CD4-positive, alpha-beta memory T cell (primary cell): ENCODE measurements at regions of chr12 and their contacts with region 1.

Region 1: GRCh38 chr12:50222275-50222795 is 55.2 kb upstream of the CERS5 start:
- DNase-seq: peak; percentile 30 to 43 (median 32)
- H3K4me3 ChIP-seq: peak overlapping the region; percentile 68 to 81
- H3K4me3 Mint-ChIP-seq: no peak overlapping the region
- H3K27ac ChIP-seq: peak overlapping the region; percentile 75
- H3K27ac Mint-ChIP-seq: no peak overlapping the region
- H3K4me1 ChIP-seq: peaks cover 41% of the 10 kb centered on the region
- H3K4me1 Mint-ChIP-seq: peaks cover 24 to 29% (median 27%) of the 10 kb centered on the region in 4 donors
- H3K27me3 ChIP-seq: no peaks in the 10 kb centered on the region
- H3K27me3 Mint-ChIP-seq: no peaks in the 10 kb centered on the region

Region 2: GRCh38 chr12:49698619-49699545 is 523.5 kb before region 1 on chr12:
- CTCF ChIA-PET with region 1: no interaction called
- POLR2A ChIA-PET with region 1: no interaction called
- intact Hi-C with region 1: no loop called
- DNase-seq: peak; percentile 11 to 55 (median 28)
- H3K4me3 ChIP-seq: peak overlapping the region in 1 of 2 donors; percentile 23
- H3K4me3 Mint-ChIP-seq: peak overlapping the region; percentile 82 to 91 (median 88)
- H3K27ac ChIP-seq: peak overlapping the region; percentile 42
- H3K27ac Mint-ChIP-seq: peak overlapping the region; percentile 75 to 93 (median 87)
- H3K4me1 ChIP-seq: peaks cover 32% of the 10 kb centered on the region
- H3K4me1 Mint-ChIP-seq: peaks cover 26 to 64% (median 43%) of the 10 kb centered on the region in 4 donors
- H3K27me3 ChIP-seq: no peaks in the 10 kb centered on the region
- H3K27me3 Mint-ChIP-seq: no peaks in the 10 kb centered on the region

Region 3: GRCh38 chr12:50032639-50033581 is 189.4 kb before region 1 on chr12:
- CTCF ChIA-PET with region 1: no interaction called
- POLR2A ChIA-PET with region 1: no interaction called
- intact Hi-C with region 1: no loop called
- DNase-seq: no peak
- H3K4me3 ChIP-seq: no peak overlapping the region
- H3K4me3 Mint-ChIP-seq: no peak overlapping the region
- H3K27ac ChIP-seq: no peak overlapping the region
- H3K27ac Mint-ChIP-seq: no peak overlapping the region
- H3K4me1 ChIP-seq: no peaks in the 10 kb centered on the region
- H3K4me1 Mint-ChIP-seq: no peaks in the 10 kb centered on the region
- H3K27me3 ChIP-seq: no peaks in the 10 kb centered on the region
- H3K27me3 Mint-ChIP-seq: peaks cover 9 to 13% of the 10 kb centered on the region in 2 donors

Region 4: GRCh38 chr12:50187084-50187900 is 35.0 kb before region 1 on chr12:
- CTCF ChIA-PET with region 1: interaction called, 3 read pairs
- POLR2A ChIA-PET with region 1: interaction called, 4 read pairs
- intact Hi-C with region 1: loop called (anchors 1 kb)
- DNase-seq: no peak
- H3K4me3 ChIP-seq: no peak overlapping the region
- H3K4me3 Mint-ChIP-seq: no peak overlapping the region
- H3K27ac ChIP-seq: no peak overlapping the region
- H3K27ac Mint-ChIP-seq: peak overlapping the region in 6 of 7 donors; percentile 14 to 80 (median 54)
- H3K4me1 ChIP-seq: peaks cover 38% of the 10 kb centered on the region
- H3K4me1 Mint-ChIP-seq: peaks cover 14 to 41% (median 23%) of the 10 kb centered on the region in 4 donors
- H3K27me3 ChIP-seq: no peaks in the 10 kb centered on the region
- H3K27me3 Mint-ChIP-seq: no peaks in the 10 kb centered on the region

Region 5: DNA sequence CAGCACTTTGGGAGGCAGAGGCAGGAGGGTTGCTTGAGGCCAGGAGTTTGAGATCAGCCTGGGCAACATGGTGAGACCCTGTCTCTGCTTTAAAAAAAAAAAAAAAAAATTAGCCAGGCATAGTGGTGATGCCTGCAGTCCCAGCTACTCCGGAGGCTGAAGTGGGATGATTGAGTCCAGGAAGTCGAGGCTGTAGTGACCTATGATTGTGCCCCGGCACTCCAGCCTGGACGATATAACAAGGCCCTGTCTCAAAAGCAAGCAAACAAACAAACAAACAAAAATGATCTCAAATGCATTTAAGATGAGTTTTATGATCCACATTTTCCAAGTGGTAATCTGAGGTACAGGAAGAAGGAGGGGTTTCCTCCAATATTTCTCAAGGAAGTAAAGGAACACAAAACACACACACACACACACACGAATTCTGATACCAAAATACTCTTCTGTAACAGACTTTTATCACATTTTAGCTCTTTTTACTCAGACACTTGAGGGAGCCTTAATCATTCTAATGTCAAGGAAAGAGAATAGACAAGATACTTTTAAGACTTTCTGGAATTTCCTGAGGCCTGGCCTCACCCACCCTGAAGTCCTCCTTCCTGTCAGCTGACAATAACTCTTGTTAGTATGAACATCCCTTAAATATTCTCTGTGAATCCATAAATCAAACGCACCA is 10.8 kb before region 1 on chr12:
- CTCF ChIA-PET with region 1: interaction called, 35 read pairs
- POLR2A ChIA-PET with region 1: interaction called, 88 read pairs
- intact Hi-C with region 1: loop called (anchors 1 kb)
- DNase-seq: no peak
- H3K4me3 ChIP-seq: peak overlapping the region in 1 of 2 donors; percentile 2
- H3K4me3 Mint-ChIP-seq: peak overlapping the region; percentile 32 to 87 (median 76)
- H3K27ac ChIP-seq: peak overlapping the region; percentile 62
- H3K27ac Mint-ChIP-seq: peak overlapping the region; percentile 88 to 97 (median 95)
- H3K4me1 ChIP-seq: peaks cover 53% of the 10 kb centered on the region
- H3K4me1 Mint-ChIP-seq: peaks cover 32 to 54% (median 40%) of the 10 kb centered on the region in 4 donors
- H3K27me3 ChIP-seq: no peaks in the 10 kb centered on the region
- H3K27me3 Mint-ChIP-seq: no peaks in the 10 kb centered on the region

Region 6: DNA sequence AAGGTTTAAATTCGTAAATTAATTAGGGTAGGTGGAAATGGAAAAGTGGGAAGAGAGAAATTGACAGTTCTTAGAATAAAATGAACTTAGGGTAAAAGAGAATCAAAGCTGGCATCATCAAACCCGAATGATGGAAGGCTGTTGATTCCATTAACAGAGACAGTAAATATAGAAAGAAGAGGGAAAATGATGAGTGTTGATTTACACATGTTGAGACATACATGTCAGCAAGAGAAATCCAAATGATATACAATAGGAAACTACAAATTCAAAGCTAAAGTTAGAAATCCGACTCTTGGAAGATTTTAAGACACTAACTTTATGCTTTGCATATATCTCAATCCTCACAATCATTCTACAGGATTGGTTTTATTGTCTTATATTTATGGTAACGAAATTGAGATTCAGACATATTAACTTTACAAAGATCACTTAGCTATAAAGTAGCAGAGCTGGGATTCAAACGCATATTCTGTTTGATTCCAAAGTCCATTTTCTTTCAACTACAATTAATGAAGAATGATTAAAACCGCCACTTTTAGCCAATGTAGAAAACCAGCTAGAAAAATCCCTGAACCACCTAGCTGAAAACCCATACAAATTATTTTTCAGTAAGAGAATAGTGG is 30.8 kb after region 1 on chr12:
- CTCF ChIA-PET with region 1: no interaction called
- POLR2A ChIA-PET with region 1: no interaction called
- intact Hi-C with region 1: no loop called
- DNase-seq: no peak
- H3K4me3 ChIP-seq: no peak overlapping the region
- H3K4me3 Mint-ChIP-seq: no peak overlapping the region
- H3K27ac ChIP-seq: no peak overlapping the region
- H3K27ac Mint-ChIP-seq: peak overlapping the region in 1 of 7 donors; percentile 53
- H3K4me1 ChIP-seq: peaks cover 6% of the 10 kb centered on the region
- H3K4me1 Mint-ChIP-seq: peaks cover 6 to 14% (median 8%) of the 10 kb centered on the region in 4 donors
- H3K27me3 ChIP-seq: no peaks in the 10 kb centered on the region
- H3K27me3 Mint-ChIP-seq: no peaks in the 10 kb centered on the region

Region 7: DNA sequence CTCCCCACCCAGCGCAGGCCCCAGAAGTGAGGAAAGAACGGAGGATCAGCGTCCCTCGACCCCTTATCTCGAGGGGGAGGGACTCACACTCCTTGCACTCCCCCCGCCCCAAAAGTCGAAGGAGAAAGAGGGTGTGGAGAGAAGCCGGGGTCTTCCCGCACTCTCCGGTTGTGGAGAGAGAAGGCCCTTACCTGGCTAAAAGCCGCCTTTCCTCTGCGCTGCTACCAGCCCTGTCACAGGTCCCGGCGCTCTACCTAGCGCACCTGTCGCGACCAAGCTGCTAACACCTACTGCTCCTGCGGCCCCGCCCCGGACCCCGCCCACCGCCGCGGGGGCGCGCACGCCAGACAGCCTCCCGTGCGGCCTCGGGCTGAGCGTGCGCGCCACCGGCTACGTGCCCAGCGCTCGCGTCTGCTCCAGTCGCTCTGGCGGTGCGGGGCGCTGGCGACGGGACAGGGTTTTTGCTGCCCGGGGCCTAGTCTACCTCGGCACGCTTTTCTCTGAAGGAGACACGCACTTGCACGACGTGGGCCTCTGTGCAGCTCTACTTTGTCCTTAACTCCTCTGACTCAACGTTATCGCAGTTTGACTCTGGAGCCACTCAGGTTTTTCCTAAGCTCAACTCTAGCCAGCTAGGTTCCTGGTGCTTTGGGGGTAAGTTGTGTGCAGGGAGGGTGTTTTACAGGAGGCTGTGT is 61.0 kb after region 1 on chr12 and contains the start of gene LIMA1:
- CTCF ChIA-PET with region 1: interaction called, 19 read pairs
- POLR2A ChIA-PET with region 1: interaction called, 25 read pairs
- intact Hi-C with region 1: loop called (anchors 2 kb)
- DNase-seq: peak; percentile 91 to 93 (median 91)
- H3K4me3 ChIP-seq: peak within 1 kb of the TSS; percentile 58 to 61
- H3K4me3 Mint-ChIP-seq: peak within 1 kb of the TSS; percentile 91 to 96 (median 92)
- H3K27ac ChIP-seq: peak within 1 kb of the TSS; percentile 70
- H3K27ac Mint-ChIP-seq: peak within 1 kb of the TSS; percentile 38 to 95 (median 87)
- H3K4me1 ChIP-seq: peaks cover 17% of the 10 kb centered on the region
- H3K4me1 Mint-ChIP-seq: peaks cover 9 to 18% (median 14%) of the 10 kb centered on the region in 4 donors
- H3K27me3 ChIP-seq: no peaks in the 10 kb centered on the region
- H3K27me3 Mint-ChIP-seq: no peaks in the 10 kb centered on the region
- total RNA-seq, gene LIMA1: 11.5 to 14.9 TPM

Region 8: DNA sequence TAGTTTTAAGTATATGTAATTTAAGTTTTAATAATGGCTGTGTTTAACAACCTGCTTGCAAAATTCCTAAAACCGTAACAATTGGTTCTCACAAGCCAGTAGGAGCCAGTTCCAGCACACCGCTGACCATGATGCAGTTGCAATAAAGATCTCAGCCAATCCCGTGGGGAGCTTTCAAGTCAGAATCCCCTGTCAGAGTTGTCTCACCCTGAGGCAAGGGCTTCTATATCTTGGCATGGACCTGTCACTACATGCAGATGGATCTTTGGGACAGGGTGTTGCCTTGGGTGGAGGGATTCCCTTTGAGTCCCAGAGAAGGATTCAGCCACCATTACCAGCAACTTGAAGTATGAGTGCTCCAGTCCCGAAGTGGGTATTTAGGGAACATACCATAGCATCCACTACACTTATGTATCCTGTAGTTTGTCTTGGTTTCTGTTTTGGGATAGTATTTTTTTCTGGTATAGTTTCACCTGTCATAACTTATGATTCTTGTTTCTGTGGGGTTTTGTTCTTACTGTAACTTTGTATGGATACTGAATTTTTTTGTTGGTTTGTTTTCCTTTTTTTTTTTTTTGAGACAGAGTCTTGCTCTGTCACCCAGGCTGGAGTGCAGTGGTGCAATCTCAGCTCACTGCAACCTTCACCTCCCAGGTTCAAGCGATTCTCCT is 91.1 kb after region 1 on chr12:
- CTCF ChIA-PET with region 1: no interaction called
- POLR2A ChIA-PET with region 1: no interaction called
- intact Hi-C with region 1: no loop called
- DNase-seq: no peak
- H3K4me3 ChIP-seq: no peak overlapping the region
- H3K4me3 Mint-ChIP-seq: no peak overlapping the region
- H3K27ac ChIP-seq: no peak overlapping the region
- H3K27ac Mint-ChIP-seq: no peak overlapping the region
- H3K4me1 ChIP-seq: no peaks in the 10 kb centered on the region
- H3K4me1 Mint-ChIP-seq: no peaks in the 10 kb centered on the region
- H3K27me3 ChIP-seq: no peaks in the 10 kb centered on the region
- H3K27me3 Mint-ChIP-seq: no peaks in the 10 kb centered on the region

Region 9: GRCh38 chr12:50400598-50401364 is 178.4 kb after region 1 on chr12 and contains the start of gene LARP4:
- CTCF ChIA-PET with region 1: no interaction called
- POLR2A ChIA-PET with region 1: interaction called, 3 read pairs
- intact Hi-C with region 1: loop called (anchors 5 kb)
- DNase-seq: peak; percentile 90 to 94 (median 91)
- H3K4me3 ChIP-seq: peak within 1 kb of the TSS; percentile 63 to 90
- H3K4me3 Mint-ChIP-seq: peak within 1 kb of the TSS; percentile 91 to 99 (median 97)
- H3K27ac ChIP-seq: peak within 1 kb of the TSS; percentile 76
- H3K27ac Mint-ChIP-seq: peak within 1 kb of the TSS; percentile 89 to 98 (median 95)
- H3K4me1 ChIP-seq: peaks cover 28% of the 10 kb centered on the region
- H3K4me1 Mint-ChIP-seq: peaks cover 19 to 42% (median 30%) of the 10 kb centered on the region in 4 donors
- H3K27me3 ChIP-seq: no peaks in the 10 kb centered on the region
- H3K27me3 Mint-ChIP-seq: peaks cover 1 to 5% of the 10 kb centered on the region in 2 donors
- total RNA-seq, gene LARP4: 38.7 to 40.7 TPM